ENCODE measurements at regions of chr9 and their contacts with region 1.

Region 1: DNA sequence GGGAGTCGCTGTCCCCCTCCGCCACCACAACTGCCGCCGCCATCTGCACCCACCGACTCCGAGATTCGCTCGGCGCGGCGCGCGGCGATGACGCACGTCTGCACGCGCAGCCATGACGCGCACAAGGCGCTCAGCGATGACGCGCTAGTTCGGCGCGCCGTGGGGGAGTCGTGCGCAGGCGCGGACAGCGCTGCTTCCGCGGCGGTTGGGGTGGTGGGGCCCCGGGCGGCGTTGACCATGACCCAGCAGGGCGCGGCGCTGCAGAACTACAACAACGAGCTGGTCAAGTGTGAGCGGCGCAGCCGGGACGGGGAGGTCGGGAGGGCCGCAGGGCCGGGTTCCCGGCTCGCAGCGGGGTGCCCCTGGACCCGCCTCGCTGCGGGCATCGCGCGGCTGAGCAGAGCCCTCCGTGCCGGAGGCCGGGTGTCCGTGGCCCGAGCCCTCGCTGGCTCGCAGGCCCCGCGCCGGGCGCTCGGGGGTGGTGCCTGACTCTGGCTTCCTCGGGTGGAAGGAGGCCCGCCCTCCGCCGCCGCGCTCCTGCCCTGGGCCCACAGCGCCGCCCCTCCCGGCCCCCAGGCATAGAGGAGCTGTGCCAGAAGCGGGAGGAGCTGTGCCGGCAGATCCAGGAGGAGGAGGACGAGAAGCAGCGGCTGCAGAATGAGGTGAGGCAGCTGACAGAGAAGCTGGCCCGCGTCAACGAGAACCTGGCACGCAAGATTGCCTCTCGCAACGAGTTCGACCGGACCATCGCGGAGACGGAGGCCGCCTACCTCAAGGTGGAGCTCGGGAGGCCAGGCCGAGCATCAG is at the starts of genes ANAPC2 and SSNA1:
- DNase-seq: peak; percentile 93
- H3K4me3 ChIP-seq: peak within 1 kb of the TSS; percentile 98
- H3K27ac ChIP-seq: peak within 1 kb of the TSS; percentile 96
- H3K4me1 ChIP-seq: peaks cover 10% of the 10 kb centered on the region
- H3K27me3 ChIP-seq: no peaks in the 10 kb centered on the region
- CTCF ChIP-seq: peak; percentile 45
- total RNA-seq, gene ANAPC2: 49.6 and 54.1 TPM in 2 replicates
- total RNA-seq, gene SSNA1: 86.8 and 87.3 TPM in 2 replicates

Region 2: GRCh38 chr9:137123468-137123837 is 65.2 kb before region 1 on chr9:
- CTCF ChIA-PET with region 1: interaction called, 13 read pairs
- POLR2A ChIA-PET with region 1: no interaction called
- intact Hi-C with region 1: no loop called
- DNase-seq: no peak
- H3K4me3 ChIP-seq: no peak overlapping the region
- H3K27ac ChIP-seq: no peak overlapping the region
- H3K4me1 ChIP-seq: peaks cover 10% of the 10 kb centered on the region
- H3K27me3 ChIP-seq: no peaks in the 10 kb centered on the region
- CTCF ChIP-seq: no peak